Caco-2 (cell line): ENCODE measurements at regions of chr2 and their contacts with region 1.

Region 1: DNA sequence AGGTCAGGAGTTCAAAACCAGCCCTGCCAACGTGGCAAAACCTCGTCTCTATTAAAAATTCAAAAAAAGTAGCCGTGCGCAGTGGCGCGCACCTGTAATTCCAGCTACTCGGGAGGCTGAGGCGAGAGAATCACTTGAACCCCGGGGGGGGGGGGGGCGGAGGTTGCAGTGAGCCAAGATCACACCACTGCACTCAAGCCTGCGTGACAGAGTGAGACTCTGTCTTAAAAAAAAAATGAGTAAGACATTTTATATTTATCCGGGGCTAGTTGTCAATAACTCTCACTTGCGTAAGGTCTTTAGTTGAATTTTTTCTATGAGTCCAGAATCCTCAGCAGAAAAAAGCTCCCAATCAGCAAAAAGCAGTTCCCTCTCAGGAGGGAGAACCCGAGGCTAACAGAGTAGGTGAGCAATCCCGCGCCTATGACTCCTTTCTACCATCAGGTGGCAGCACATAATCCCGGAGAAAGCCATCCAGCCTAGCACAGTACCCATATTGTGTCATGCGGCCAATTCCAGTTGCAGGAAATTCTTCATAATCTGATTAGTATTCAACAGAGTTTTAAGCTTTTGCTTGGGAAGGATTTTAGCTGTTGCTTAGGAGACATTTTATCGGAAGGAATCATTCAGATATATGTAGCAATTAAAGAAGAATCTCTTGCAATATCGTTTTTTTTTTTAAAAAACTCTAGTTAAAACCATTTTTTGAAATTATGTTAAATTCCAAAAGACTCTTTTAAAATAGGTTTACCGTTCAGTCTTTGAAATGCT is 11.9 kb upstream of the CRYGA start:
- DNase-seq: peak; percentile 82 to 85
- H3K4me3 ChIP-seq: no peak overlapping the region
- H3K4me3 Mint-ChIP-seq: no peak overlapping the region
- H3K27ac Mint-ChIP-seq: no peak overlapping the region
- H3K4me1 ChIP-seq: peaks cover 16% of the 10 kb centered on the region
- H3K4me1 Mint-ChIP-seq: peaks cover 7% of the 10 kb centered on the region
- H3K27me3 ChIP-seq: no peaks in the 10 kb centered on the region
- H3K27me3 Mint-ChIP-seq: no peaks in the 10 kb centered on the region
- CTCF ChIP-seq: peak; percentile 75 to 95

Region 2: GRCh38 chr2:207926133-207926988 is 248.9 kb before region 1 on chr2:
- CTCF ChIA-PET with region 1: no interaction called
- POLR2A ChIA-PET with region 1: no interaction called
- intact Hi-C with region 1: no loop called
- DNase-seq: no peak
- H3K4me3 ChIP-seq: no peak overlapping the region
- H3K4me3 Mint-ChIP-seq: no peak overlapping the region
- H3K27ac Mint-ChIP-seq: peak overlapping the region; percentile 56
- H3K4me1 ChIP-seq: peaks cover 46% of the 10 kb centered on the region
- H3K4me1 Mint-ChIP-seq: peaks cover 37% of the 10 kb centered on the region
- H3K27me3 ChIP-seq: no peaks in the 10 kb centered on the region
- H3K27me3 Mint-ChIP-seq: no peaks in the 10 kb centered on the region
- CTCF ChIP-seq: no peak

Region 3: GRCh38 chr2:208240619-208241209 is 65.5 kb after region 1 on chr2:
- CTCF ChIA-PET with region 1: interaction called, 5 read pairs
- POLR2A ChIA-PET with region 1: no interaction called
- intact Hi-C with region 1: loop called (anchors 2 kb)
- DNase-seq: peak in 1 of 2 experiments; percentile 25
- H3K4me3 ChIP-seq: no peak overlapping the region
- H3K4me3 Mint-ChIP-seq: no peak overlapping the region
- H3K27ac Mint-ChIP-seq: no peak overlapping the region
- H3K4me1 ChIP-seq: peaks cover 12% of the 10 kb centered on the region
- H3K4me1 Mint-ChIP-seq: peaks cover 15% of the 10 kb centered on the region
- H3K27me3 ChIP-seq: no peaks in the 10 kb centered on the region
- H3K27me3 Mint-ChIP-seq: no peaks in the 10 kb centered on the region
- CTCF ChIP-seq: no peak

Region 4: GRCh38 chr2:208334230-208334629 is 159.0 kb after region 1 on chr2:
- CTCF ChIA-PET with region 1: no interaction called
- POLR2A ChIA-PET with region 1: no interaction called
- intact Hi-C with region 1: loop called (anchors 10 kb)
- DNase-seq: peak; percentile 39 to 55
- H3K4me3 ChIP-seq: no peak overlapping the region
- H3K4me3 Mint-ChIP-seq: no peak overlapping the region
- H3K27ac Mint-ChIP-seq: no peak overlapping the region
- H3K4me1 ChIP-seq: peaks cover 5% of the 10 kb centered on the region; the same call in 1 of the 2 replicates
- H3K4me1 Mint-ChIP-seq: peaks cover 7% of the 10 kb centered on the region
- H3K27me3 ChIP-seq: no peaks in the 10 kb centered on the region
- H3K27me3 Mint-ChIP-seq: no peaks in the 10 kb centered on the region
- CTCF ChIP-seq: no peak